Activated naive CD4-positive, alpha-beta T cell treated with anti-CD3 and anti-CD28 coated beads, Interleukin-2, amount 10 ng/mL, durations not matched to agents 7 days and 5 days (primary cell): ENCODE measurements at regions of chr15 and their contacts with region 1.

Region 1: DNA sequence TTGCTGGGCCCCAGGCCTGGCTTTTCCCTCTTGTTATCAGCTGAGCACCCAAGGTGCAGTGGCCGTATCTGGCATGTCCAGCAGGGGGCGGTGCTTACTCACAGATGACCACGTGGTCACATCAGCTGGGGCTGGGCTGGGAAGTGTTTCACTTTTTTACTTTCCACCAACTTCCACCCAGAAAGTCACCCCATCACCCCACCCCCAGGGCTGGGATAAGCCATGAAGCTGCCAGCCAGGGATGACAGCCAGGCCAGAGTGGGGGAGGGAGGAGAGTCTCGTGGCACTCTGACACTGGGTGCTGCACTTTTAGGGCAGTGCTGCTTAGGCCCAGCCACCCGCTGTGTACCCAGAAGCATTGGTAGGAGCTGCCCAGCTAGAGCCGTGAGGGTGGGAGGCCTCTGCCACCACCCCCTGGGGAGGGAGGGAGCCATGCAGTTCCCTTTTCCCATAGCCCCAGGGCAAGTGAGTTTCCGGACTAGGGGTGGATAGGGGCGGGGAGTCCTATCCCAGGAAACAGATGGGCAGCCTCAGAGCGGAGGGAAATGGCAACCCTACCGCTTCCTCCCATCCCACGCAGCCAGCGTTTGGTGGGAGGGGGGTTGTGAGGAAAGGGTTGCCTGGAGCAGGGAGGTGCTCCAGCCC is 6.1 kb downstream of the PPCDC start:
- DNase-seq: peak; percentile 94
- H3K4me3 Mint-ChIP-seq: no peak overlapping the region
- H3K27ac Mint-ChIP-seq: peak overlapping the region; percentile 83
- H3K4me1 Mint-ChIP-seq: peaks cover 42% of the 10 kb centered on the region
- H3K27me3 Mint-ChIP-seq: no peaks in the 10 kb centered on the region

Region 2: GRCh38 chr15:74901612-74902082 is 127.9 kb before region 1 on chr15:
- CTCF ChIA-PET with region 1: no interaction called
- DNase-seq: peak; percentile 73
- H3K4me3 Mint-ChIP-seq: no peak overlapping the region
- H3K27ac Mint-ChIP-seq: peak overlapping the region; percentile 68
- H3K4me1 Mint-ChIP-seq: peaks cover 49% of the 10 kb centered on the region
- H3K27me3 Mint-ChIP-seq: no peaks in the 10 kb centered on the region

Region 3: GRCh38 chr15:74995779-74996765 is 33.4 kb before region 1 on chr15:
- CTCF ChIA-PET with region 1: no interaction called
- DNase-seq: no peak
- H3K4me3 Mint-ChIP-seq: peak overlapping the region; percentile 62
- H3K27ac Mint-ChIP-seq: peak overlapping the region; percentile 3
- H3K4me1 Mint-ChIP-seq: peaks cover 10% of the 10 kb centered on the region
- H3K27me3 Mint-ChIP-seq: peaks cover 45% of the 10 kb centered on the region

Region 4: GRCh38 chr15:75076277-75076676 is 46.8 kb after region 1 on chr15:
- CTCF ChIA-PET with region 1: no interaction called
- DNase-seq: no peak
- H3K4me3 Mint-ChIP-seq: no peak overlapping the region
- H3K27ac Mint-ChIP-seq: no peak overlapping the region
- H3K4me1 Mint-ChIP-seq: peaks cover 27% of the 10 kb centered on the region
- H3K27me3 Mint-ChIP-seq: peaks cover 34% of the 10 kb centered on the region

Region 5: GRCh38 chr15:75090388-75090734 is 60.9 kb after region 1 on chr15:
- CTCF ChIA-PET with region 1: no interaction called
- DNase-seq: no peak
- H3K4me3 Mint-ChIP-seq: no peak overlapping the region
- H3K27ac Mint-ChIP-seq: no peak overlapping the region
- H3K4me1 Mint-ChIP-seq: peaks cover 8% of the 10 kb centered on the region
- H3K27me3 Mint-ChIP-seq: peaks cover 14% of the 10 kb centered on the region

Region 6: GRCh38 chr15:75208501-75209288 is 179.2 kb after region 1 on chr15:
- CTCF ChIA-PET with region 1: interaction called, 109 read pairs
- DNase-seq: no peak
- H3K4me3 Mint-ChIP-seq: no peak overlapping the region
- H3K27ac Mint-ChIP-seq: no peak overlapping the region
- H3K4me1 Mint-ChIP-seq: peaks cover 38% of the 10 kb centered on the region
- H3K27me3 Mint-ChIP-seq: no peaks in the 10 kb centered on the region